HepG2 (cell line): ENCODE measurements at regions of chr6 and their contacts with region 1.

Region 1: DNA sequence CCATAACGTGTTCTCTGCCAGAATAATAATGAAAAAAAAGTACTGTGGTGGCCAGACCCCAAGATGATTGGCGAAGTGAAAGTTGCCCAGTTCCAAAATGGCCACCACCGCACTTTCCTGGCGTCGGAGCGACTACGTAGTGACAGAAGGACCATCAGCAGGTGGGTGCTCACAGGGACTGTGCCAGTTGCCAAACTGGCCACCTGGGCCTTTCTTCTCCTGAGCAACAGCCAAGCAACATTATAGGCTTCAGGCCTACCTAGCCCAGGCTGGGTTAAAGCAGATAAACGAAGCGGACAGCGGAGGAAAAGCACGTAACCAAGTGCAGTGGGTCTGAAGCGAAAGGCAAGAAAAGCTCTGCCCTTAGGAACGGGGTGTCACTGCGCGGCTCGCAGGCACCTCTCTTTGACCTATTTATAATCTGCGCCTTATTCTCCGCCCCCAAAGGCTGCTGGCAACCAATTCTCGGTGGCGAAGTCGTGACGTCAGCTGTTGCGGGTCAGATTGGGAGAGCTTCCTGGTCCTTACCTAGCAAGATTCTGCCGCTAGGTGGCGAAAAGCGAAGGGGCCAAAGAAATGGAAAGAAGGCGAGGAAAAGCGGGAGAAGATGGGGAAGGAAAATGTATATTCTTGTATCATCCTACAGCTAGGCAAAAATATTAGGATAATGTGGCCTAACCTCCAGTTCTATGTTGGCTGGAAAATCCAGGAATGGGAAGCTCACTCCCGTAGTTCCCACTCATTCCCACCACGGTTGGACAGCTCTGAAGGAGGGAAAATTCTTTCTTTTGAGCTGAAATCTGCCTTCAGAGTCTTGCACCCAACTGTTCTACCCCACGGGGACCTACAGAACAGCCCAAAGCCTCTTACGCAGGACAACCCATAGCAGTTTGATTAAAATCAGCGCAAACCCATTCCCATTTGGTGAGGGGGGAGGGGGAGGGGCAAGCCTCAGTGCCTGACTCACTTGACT is 6.9 kb upstream of the MOG start:
- DNase-seq: peak; percentile 96
- ATAC-seq: peak; percentile 96
- H3K4me3 ChIP-seq: peak overlapping the region; percentile 39 to 71 (median 43)
- H3K27ac ChIP-seq: no peak overlapping the region
- H3K4me1 ChIP-seq: peaks cover 6% of the 10 kb centered on the region; the same call in 1 of the 2 replicates
- H3K27me3 ChIP-seq: no peaks in the 10 kb centered on the region; a peak in 1 of 5 replicates
- CTCF ChIP-seq: peak; percentile 94
- EP300 ChIP-seq: no peak
- POLR2A ChIP-seq: peak; percentile 34 to 65; a peak in 1 of 4 replicates
- RAD21 ChIP-seq: no peak

Region 2: GRCh38 chr6:29685718-29686326 is 35.8 kb after region 1 on chr6:
- CTCF ChIA-PET with region 1: no interaction called
- POLR2A ChIA-PET with region 1: no interaction called
- in situ Hi-C with region 1: no loop called
- intact Hi-C with region 1: loop called (anchors 5 kb)
- DNase-seq: no peak
- ATAC-seq: peak; percentile 52; the same call in 2 of the 3 replicates
- H3K4me3 ChIP-seq: no peak overlapping the region
- H3K27ac ChIP-seq: no peak overlapping the region
- H3K4me1 ChIP-seq: no peaks in the 10 kb centered on the region
- H3K27me3 ChIP-seq: no peaks in the 10 kb centered on the region; a peak in 2 of 5 replicates
- CTCF ChIP-seq: peak; percentile 46
- EP300 ChIP-seq: no peak
- POLR2A ChIP-seq: no peak
- RAD21 ChIP-seq: no peak

Region 3: DNA sequence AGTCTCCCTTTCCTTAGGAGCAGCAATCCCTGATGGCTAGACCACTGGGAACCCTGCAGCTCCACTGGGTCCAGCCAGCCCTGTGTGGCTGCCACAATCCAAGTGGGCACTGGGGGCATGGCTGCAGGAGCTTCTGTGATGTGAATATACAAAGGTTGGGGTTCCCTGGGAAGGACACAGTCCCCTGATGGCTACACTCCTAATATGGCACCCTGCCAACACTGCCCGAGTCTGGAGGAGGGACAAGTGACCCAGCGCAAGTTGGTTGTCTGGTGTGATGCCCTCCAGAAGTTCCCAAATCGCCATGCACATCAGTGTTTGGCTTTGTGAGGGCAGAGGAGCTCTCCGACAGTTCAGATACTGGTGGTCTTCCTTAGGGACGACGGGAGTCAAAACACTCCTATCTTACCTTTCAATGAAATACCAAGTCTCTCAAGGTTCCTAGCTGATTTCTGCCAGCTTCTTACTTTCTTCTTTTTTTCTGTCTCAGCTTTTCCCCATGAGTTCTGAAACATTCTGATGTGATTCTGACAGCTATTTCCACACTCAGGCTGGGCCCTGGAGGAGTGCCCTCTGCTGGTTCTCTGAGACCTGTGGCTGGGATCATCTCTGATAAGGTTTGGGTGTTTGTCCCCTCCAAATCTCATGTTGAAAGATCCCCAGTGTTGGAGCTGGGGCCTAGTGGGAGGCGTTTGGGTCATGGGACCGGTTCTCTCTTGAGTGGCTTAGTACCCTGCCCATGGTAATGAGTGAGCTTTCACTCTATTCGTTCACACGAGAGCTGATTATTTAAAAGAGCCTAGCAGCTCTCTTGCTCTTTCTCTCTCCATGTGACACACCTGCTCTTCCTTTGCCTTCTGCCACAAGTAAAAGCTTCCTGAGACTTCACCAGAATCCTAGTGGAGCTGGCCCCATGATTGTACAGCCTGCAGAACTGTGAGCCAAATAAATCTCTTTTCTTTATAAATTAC is 46.5 kb after region 1 on chr6:
- CTCF ChIA-PET with region 1: interaction called, 8 read pairs
- POLR2A ChIA-PET with region 1: no interaction called
- in situ Hi-C with region 1: no loop called
- intact Hi-C with region 1: loop called (anchors 2 kb)
- DNase-seq: no peak
- ATAC-seq: peak; percentile 86
- H3K4me3 ChIP-seq: no peak overlapping the region
- H3K27ac ChIP-seq: no peak overlapping the region
- H3K4me1 ChIP-seq: no peaks in the 10 kb centered on the region
- H3K27me3 ChIP-seq: no peaks in the 10 kb centered on the region
- CTCF ChIP-seq: peak; percentile 61
- EP300 ChIP-seq: no peak
- POLR2A ChIP-seq: no peak
- RAD21 ChIP-seq: no peak

Region 4: DNA sequence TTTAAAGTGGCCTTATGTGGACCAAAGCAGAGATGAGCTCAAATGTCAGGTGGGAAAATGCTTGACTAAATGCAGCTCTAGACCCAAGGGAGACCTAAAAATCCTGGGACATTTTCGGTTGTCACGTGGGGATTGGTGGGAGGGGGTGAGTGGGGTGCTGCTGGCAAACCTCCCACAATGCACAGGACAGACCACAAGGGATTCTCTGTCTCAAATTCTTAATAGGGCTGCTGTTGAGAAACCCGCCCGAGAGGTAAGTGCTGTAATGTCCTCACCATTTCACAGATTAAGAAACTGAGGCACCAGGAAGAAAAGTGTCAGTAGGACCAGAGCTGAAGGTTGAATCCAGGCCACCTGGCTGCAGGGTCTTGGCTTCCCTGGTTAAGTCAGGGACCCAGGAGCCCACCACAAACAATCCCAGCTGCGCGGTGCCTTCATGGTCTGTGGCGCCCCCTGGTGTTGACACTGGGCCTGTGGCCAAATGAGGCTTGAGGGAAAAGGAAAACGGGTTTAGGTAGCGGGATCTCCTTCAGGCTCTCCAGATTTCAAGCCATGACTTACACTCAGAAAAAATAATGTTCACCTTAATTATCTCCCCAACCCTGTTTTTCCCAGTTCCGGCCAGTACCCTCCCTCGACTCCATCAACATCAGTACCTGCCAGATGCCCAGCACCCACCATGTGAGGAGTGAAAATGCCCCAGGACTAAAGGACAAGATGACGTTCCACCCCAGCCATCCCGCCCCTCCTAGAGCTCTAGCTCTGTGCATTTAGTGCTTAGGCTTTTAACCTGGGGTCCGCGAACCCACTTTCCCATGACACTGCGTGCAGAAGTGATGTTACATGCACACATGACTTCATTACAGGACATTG is 184.8 kb after region 1 on chr6:
- CTCF ChIA-PET with region 1: no interaction called
- POLR2A ChIA-PET with region 1: no interaction called
- in situ Hi-C with region 1: no loop called
- intact Hi-C with region 1: loop called (anchors 5 kb)
- DNase-seq: no peak
- ATAC-seq: peak; percentile 74
- H3K4me3 ChIP-seq: no peak overlapping the region
- H3K27ac ChIP-seq: no peak overlapping the region
- H3K4me1 ChIP-seq: no peaks in the 10 kb centered on the region
- H3K27me3 ChIP-seq: peaks cover 0 to 3% of the 10 kb centered on the region in 2 experiments; a peak in 1 of 5 replicates
- CTCF ChIP-seq: peak; percentile 89
- EP300 ChIP-seq: no peak
- POLR2A ChIP-seq: no peak
- RAD21 ChIP-seq: peak; percentile 61